RWPE1 (cell line): ENCODE measurements at regions of chr20 and their contacts with region 1.

Region 1: DNA sequence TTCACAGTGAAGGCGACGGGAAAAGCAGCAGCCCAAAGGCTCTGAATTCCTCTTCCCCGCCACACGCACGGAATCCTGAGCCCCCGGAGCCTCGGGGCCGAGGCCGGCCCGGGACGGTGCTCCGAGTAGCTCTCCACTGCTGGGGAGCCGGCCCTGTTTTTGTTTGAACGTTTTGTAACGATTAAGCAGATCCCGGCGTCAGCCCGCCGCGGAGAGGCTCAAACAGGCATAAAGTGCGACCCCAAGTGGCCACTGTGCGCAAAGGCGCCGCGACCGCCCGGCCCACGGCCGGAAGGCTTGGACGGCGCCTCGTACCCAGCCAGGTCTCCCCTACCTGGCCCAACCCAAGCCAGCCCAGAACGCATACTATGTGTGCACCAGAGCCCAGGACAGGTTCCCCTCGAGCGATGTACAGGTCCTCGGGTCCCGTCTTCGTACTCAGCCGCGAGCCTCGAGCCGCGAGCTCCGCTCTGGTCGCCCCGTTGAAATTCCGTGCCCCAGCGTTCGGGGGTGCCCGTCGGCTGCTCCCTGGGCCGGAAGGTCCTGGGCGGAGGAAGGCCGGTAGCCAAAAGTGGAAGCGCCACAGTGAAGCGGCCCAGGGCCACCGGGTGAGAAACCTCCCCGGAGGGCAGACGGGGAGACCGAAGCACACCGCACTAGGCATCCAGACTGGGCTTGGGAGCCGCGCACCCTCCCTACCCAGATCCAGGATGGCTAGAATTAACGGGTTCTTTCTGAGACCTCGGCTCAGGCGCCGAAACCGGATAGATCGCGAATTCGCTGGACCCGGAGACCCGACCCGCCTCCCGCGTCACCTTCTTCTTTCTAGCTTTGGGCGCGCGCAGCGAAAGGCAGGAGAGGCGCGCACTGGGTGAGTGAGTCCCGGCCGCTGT is 1.2 kb upstream of the MAFB start:
- DNase-seq: peak; percentile 92
- H3K27ac ChIP-seq: peak overlapping the region; percentile 97
- CTCF ChIP-seq: peak; percentile 99

Region 2: GRCh38 chr20:40160097-40160550 is 530.1 kb before region 1 on chr20:
- CTCF ChIA-PET with region 1: interaction called, 12 read pairs
- POLR2A ChIA-PET with region 1: no interaction called
- DNase-seq: peak; percentile 72
- H3K27ac ChIP-seq: no peak overlapping the region
- CTCF ChIP-seq: peak; percentile 95

Region 3: DNA sequence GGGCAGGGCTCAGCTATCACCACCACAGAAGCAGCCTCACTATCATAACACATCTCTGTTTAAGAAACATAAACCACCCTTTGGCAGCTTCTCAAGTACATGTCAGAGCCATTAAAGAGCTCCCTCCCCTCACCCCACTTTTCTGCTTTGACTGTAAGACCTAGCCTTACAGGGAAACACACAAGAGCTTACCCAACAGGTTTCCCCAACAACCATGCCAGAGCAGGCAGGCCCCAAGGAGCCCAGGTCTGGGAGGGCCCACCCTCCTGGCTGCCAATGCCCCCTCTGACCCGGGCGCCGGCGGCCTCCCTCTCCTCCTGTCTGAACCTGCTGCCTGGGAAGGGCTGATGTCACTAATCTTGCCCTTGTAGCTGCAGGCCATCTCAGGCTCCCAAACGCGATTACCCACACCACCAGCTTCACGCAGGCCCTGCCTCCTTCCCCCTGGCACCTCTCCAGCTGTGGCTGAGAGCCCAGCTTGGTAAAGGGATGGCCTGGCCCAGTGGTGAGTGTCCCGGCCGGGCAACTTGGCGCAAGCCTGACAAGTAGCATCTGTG is 403.1 kb before region 1 on chr20:
- CTCF ChIA-PET with region 1: interaction called, 17 read pairs
- POLR2A ChIA-PET with region 1: interaction called, 18 read pairs
- DNase-seq: peak; percentile 92
- H3K27ac ChIP-seq: peak overlapping the region; percentile 81
- CTCF ChIP-seq: no peak

Region 4: DNA sequence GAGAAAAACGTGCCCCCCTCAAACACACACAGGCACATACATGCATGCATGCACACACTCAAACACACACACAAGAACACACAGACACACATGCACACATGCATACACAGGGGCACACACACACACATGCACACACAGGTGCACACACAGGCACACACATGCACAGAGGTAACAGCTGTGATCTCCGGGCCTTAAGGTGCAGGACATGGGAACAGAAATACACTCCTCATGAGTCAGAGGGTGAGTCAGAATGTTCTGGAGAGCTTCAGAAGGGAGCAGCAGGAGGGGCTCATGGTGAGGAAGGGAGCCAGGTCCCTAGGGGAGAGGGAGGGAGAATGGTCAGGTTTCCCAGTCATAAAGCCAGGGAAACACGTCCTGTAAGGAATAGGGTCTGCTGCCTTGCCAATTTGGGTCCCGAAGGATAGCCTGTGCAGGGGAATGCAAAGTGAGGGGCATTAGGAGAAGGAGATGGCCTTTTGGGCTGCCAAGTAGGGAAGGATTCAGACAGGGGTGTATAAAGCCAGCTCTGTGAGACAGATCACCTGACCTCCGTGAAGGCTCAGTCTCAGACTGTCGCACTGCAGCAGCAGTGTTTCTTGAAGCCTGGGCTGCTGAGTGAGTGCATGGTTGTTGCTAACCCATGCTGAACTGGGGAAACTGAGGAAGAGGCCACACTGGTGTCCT is 125.0 kb before region 1 on chr20:
- CTCF ChIA-PET with region 1: interaction called, 3 read pairs
- POLR2A ChIA-PET with region 1: interaction called, 10 read pairs
- DNase-seq: peak; percentile 99
- H3K27ac ChIP-seq: peak overlapping the region; percentile 88
- CTCF ChIP-seq: no peak

Region 5: DNA sequence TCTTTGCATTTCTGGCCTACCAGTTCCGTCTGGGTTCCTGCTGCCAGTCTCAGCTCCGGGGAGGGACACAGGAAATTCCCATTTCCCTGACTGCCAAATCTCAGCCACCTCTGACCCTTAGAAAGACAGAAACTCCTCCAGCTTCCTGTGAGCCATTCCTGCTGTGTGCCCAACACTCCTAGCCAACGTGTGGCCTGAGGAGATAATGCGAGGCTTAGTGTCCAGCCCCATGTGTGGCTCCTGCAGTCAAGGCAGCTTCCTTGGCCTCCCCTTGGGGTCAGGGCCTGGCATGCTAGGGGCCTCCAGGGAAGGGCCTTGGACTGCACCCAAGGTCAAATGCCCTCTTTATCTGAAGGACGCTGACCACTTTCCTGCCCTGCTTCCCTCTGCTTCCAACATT is 46.3 kb before region 1 on chr20:
- CTCF ChIA-PET with region 1: no interaction called
- POLR2A ChIA-PET with region 1: no interaction called
- DNase-seq: no peak
- H3K27ac ChIP-seq: no peak overlapping the region
- CTCF ChIP-seq: no peak